K562 (cell line): ENCODE measurements at regions of chr4 and their contacts with region 1.

Region 1: GRCh38 chr4:4430492-4431197 is 43.7 kb downstream of the NSG1 start:
- DNase-seq: peak; percentile 65 to 79 (median 71)
- ATAC-seq: peak; percentile 98
- H3K4me3 ChIP-seq: no peak overlapping the region
- H3K27ac ChIP-seq: no peak overlapping the region
- H3K4me1 ChIP-seq: no peaks in the 10 kb centered on the region
- H3K27me3 ChIP-seq: no peaks in the 10 kb centered on the region
- CTCF ChIP-seq: peak; percentile 74 to 82 (median 76)
- EP300 ChIP-seq: no peak
- POLR2A ChIP-seq: no peak
- RAD21 ChIP-seq: peak in 1 of 2 experiments; percentile 60; a peak in 2 of 4 replicates

Region 2: DNA sequence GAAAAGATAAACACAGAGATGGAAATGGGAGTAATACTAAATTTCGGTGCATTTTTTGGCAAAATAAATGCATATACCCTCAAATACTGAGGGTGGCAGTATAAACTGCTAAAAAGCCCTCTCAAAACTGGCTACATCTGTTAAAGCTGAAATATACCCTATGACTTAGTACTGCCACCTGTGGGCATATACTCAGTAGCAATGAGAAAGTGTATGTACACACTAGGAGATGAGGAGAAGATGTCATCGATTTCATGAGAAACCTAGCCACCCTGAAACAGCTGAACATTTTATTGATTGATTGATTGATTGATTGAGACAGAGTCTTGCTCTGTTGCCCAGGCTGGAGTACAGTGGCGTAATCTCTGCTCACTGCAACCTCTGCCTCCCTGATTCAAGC is 170.4 kb before region 1 on chr4:
- CTCF ChIA-PET with region 1: interaction called, 6 read pairs
- POLR2A ChIA-PET with region 1: no interaction called
- in situ Hi-C with region 1: no loop called
- intact Hi-C with region 1: loop called (anchors 10 kb)
- DNase-seq: peak in 2 of 4 experiments; percentile 36 to 54
- ATAC-seq: peak; percentile 84
- H3K4me3 ChIP-seq: no peak overlapping the region
- H3K27ac ChIP-seq: no peak overlapping the region
- H3K4me1 ChIP-seq: no peaks in the 10 kb centered on the region; a peak in 1 of 5 replicates
- H3K27me3 ChIP-seq: peaks cover 9 to 29% of the 10 kb centered on the region in 2 experiments; a peak in 4 of 5 replicates
- CTCF ChIP-seq: peak; percentile 54 to 88 (median 79)
- EP300 ChIP-seq: no peak
- POLR2A ChIP-seq: no peak
- RAD21 ChIP-seq: peak; percentile 23 to 77; a peak in 2 of 4 replicates

Region 3: GRCh38 chr4:4302416-4302815 is 128.2 kb before region 1 on chr4:
- CTCF ChIA-PET with region 1: no interaction called
- POLR2A ChIA-PET with region 1: no interaction called
- in situ Hi-C with region 1: no loop called
- intact Hi-C with region 1: no loop called
- DNase-seq: no peak
- ATAC-seq: no peak
- H3K4me3 ChIP-seq: no peak overlapping the region
- H3K27ac ChIP-seq: no peak overlapping the region
- H3K4me1 ChIP-seq: peaks cover 0 to 8% of the 10 kb centered on the region in 2 experiments; a peak in 2 of 5 replicates
- H3K27me3 ChIP-seq: no peaks in the 10 kb centered on the region
- CTCF ChIP-seq: no peak
- EP300 ChIP-seq: no peak
- POLR2A ChIP-seq: no peak
- RAD21 ChIP-seq: no peak